Activated naive CD4-positive, alpha-beta T cell treated with anti-CD3 and anti-CD28 coated beads for 36 hours (primary cell): ENCODE measurements at regions of chr15 and their contacts with region 1.

Region 1: DNA sequence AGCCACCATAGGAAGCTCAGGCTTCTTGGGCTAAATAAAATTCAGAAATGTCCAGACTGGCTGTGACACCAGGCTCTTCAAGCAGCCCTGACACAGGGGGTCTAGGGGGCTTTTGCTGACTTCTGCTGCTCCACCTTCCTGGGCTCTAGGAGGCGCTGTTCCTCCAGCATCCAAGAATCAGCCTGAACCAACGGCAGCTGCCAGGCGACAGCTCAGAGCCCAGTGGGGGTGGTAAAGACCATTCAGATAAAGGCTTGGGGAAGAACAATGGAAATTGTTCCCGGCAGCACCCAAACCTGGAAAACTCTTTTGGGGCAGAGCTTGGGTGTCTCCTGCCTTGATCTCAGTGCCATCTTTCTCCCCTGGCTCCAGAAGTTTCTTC is 21.6 kb upstream of the PSTPIP1 start:
- DNase-seq: peak; percentile 85
- H3K4me3 Mint-ChIP-seq: no peak overlapping the region
- H3K27ac Mint-ChIP-seq: no peak overlapping the region
- H3K4me1 Mint-ChIP-seq: peaks cover 16% of the 10 kb centered on the region
- H3K27me3 Mint-ChIP-seq: no peaks in the 10 kb centered on the region

Region 2: GRCh38 chr15:76954744-76955143 is 18.6 kb before region 1 on chr15:
- CTCF ChIA-PET with region 1: interaction called, 13 read pairs
- intact Hi-C with region 1: no loop called
- DNase-seq: no peak
- H3K4me3 Mint-ChIP-seq: no peak overlapping the region
- H3K27ac Mint-ChIP-seq: no peak overlapping the region
- H3K4me1 Mint-ChIP-seq: peaks cover 7% of the 10 kb centered on the region
- H3K27me3 Mint-ChIP-seq: no peaks in the 10 kb centered on the region

Region 3: GRCh38 chr15:76994971-76995945 is 21.9 kb after region 1 on chr15 and contains the start of gene PSTPIP1:
- CTCF ChIA-PET with region 1: interaction called, 38 read pairs
- intact Hi-C with region 1: loop called (anchors 1 kb)
- DNase-seq: peak; percentile 86
- H3K4me3 Mint-ChIP-seq: peak within 1 kb of the TSS; percentile 84
- H3K27ac Mint-ChIP-seq: peak within 1 kb of the TSS; percentile 98
- H3K4me1 Mint-ChIP-seq: peaks cover 58% of the 10 kb centered on the region
- H3K27me3 Mint-ChIP-seq: no peaks in the 10 kb centered on the region
- total RNA-seq, gene PSTPIP1: 94.2 to 102 TPM

Region 4: DNA sequence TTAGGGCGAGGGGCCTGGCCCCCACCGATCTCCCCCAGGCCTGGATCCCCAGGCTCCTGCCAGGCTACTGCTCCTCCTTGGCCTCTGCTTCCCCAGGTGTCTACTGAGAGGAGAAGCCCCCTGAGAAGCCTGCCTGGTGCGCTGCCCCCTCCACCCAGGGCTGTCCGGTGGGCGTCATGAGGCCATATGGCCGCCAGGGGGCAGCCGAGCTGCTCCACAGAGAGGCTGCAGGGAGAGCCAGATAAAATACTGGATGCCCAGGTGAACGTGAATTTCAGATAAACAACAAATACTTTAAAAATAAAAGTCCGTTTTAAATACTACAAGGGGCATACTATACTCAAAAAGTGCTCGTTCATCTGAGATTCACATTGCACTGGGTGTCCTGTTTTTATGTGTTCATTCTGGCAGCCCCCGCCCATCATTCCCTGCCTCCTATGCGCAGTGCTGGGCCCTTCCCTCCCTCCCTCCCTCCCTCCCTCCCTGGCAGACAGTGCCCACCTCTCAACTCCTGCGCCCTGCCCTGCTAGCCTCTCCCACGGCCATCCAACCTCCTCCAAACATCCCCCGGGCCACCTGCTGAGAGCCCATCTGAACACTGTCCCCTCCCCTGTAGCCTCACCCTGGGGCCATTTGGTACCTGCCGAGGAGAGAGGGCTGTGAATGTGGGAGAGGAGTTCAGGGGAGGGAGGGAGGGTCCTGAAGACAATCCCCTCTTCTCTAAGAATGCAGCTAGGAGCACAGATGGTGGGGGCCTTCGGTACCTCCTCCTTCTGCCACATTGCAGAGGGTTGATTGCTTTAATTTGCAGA is 51.1 kb after region 1 on chr15:
- CTCF ChIA-PET with region 1: interaction called, 85 read pairs
- intact Hi-C with region 1: loop called (anchors 1 kb)
- DNase-seq: peak; percentile 74
- H3K4me3 Mint-ChIP-seq: no peak overlapping the region
- H3K27ac Mint-ChIP-seq: peak overlapping the region; percentile 100
- H3K4me1 Mint-ChIP-seq: peaks cover 47% of the 10 kb centered on the region
- H3K27me3 Mint-ChIP-seq: no peaks in the 10 kb centered on the region

Region 5: DNA sequence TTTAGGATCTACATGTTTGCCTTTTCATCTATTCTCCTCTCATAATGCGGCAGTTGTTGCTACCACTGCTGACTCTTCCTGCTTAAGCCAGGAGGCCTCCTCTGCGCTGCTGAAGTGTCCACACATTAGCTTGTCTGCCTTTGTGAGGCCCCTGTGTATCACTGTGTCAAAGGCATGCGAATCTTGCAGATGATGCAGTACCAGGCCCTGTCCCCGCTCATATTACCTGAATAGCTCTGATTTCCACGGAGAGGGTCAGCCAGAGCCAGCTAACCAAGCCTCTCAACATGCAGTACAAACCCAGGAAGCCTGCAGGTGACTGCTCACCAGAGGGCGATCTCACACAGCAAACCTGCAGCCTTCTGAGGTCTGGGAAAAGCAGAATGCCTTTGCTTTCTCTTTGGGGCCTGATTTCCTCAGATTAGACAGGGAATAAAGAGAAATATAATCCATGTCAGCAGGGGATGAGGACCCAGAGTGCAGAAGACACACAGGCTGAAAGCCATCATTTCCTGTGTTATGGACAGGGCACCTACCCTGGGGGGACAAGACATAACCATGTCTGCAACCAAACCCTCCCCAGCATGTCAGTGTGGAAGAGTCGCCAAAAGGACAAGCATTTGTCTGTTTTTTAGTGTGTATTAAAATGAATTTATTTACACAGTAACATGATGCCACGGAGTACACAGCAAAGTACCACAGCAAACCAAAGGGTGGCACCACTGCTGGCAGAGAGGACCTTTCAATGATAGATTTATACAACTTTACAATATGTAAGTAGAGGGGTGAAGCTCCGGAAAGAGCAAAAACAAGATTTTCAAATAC is 134.4 kb after region 1 on chr15:
- CTCF ChIA-PET with region 1: interaction called, 15 read pairs
- intact Hi-C with region 1: no loop called
- DNase-seq: peak; percentile 71
- H3K4me3 Mint-ChIP-seq: no peak overlapping the region
- H3K27ac Mint-ChIP-seq: no peak overlapping the region
- H3K4me1 Mint-ChIP-seq: no peaks in the 10 kb centered on the region
- H3K27me3 Mint-ChIP-seq: no peaks in the 10 kb centered on the region

Region 6: DNA sequence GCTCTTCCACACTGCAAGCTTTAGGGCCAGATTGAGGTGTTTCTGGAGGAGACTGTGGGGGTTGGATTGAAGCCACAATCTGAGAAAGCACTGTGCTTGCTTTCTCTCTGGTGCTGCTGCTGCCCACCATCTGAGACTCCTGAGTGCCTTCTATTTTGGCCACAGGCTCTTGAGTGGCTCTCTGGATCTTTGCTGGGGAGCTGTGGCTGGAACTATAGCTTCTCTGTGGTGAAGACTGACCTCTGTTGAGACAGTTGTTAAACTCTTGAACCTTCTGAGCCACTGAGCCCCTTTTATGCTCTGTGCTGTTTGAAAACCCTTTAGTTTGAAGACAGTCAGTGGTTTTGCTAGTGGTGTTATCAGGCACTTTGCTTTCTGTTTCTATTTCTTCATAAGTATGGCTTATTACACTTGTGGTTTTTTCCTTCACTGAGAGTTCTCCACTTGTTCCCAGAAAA is 206.2 kb after region 1 on chr15:
- CTCF ChIA-PET with region 1: no interaction called
- intact Hi-C with region 1: loop called (anchors 2 kb)
- DNase-seq: peak; percentile 21
- H3K4me3 Mint-ChIP-seq: no peak overlapping the region
- H3K27ac Mint-ChIP-seq: peak overlapping the region; percentile 44
- H3K4me1 Mint-ChIP-seq: peaks cover 38% of the 10 kb centered on the region
- H3K27me3 Mint-ChIP-seq: no peaks in the 10 kb centered on the region

Region 7: DNA sequence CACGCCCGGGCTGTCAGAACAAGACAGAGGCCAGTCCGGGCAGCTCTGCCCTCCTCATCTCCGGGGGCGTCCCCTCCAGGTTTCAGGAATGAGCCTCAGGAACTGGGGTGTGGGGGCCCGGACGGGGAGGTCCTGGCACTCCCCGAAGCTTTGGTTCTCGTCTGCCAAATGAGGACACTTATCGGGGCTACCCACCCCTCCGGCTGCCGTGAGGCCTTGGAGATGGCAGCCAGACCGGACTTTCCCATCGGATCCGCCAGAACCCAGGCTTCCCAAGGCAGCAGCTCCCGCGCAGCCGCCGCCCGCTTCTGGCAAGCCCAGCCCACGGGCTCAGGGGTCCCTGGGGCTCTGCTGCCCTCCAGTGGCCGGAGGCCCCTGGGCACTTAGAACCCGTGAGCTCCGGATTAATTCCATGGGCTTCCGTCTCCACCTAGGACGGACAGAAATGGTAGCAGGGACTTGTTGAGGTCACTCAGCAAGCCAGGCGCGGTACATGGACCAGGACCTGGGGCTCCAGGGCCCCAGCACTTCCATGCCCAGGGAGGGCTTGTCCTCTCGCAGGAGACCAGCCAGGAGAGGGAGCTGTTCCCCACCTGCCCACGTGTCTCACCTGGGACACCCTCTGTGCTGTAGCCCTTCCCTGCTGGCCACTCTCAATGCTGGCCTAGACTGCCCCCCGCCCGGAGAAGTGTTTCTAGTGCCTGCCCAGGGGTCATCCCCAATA is 570.0 kb after region 1 on chr15:
- CTCF ChIA-PET with region 1: interaction called, 16 read pairs
- intact Hi-C with region 1: loop called (anchors 2 kb)
- DNase-seq: peak; percentile 84
- H3K4me3 Mint-ChIP-seq: peak overlapping the region; percentile 67
- H3K27ac Mint-ChIP-seq: no peak overlapping the region
- H3K4me1 Mint-ChIP-seq: peaks cover 10% of the 10 kb centered on the region
- H3K27me3 Mint-ChIP-seq: no peaks in the 10 kb centered on the region